CD8-positive, alpha-beta memory T cell (primary cell): ENCODE measurements at regions of chr19 and their contacts with region 1.

Region 1: GRCh38 chr19:11987405-11988281 is 22.8 kb downstream of the ZNF763 start:
- DNase-seq: peak; percentile 82 to 93 (median 87)
- H3K4me3 ChIP-seq: peak overlapping the region; percentile 64
- H3K4me3 Mint-ChIP-seq: peak overlapping the region; percentile 91 to 99 (median 98)
- H3K27ac ChIP-seq: peak overlapping the region; percentile 52
- H3K27ac Mint-ChIP-seq: peak overlapping the region; percentile 66 to 97 (median 92)
- H3K4me1 ChIP-seq: no peaks in the 10 kb centered on the region
- H3K4me1 Mint-ChIP-seq: peaks cover 22 to 44% (median 38%) of the 10 kb centered on the region in 3 donors
- H3K27me3 ChIP-seq: no peaks in the 10 kb centered on the region
- H3K27me3 Mint-ChIP-seq: no peaks in the 10 kb centered on the region

Region 2: DNA sequence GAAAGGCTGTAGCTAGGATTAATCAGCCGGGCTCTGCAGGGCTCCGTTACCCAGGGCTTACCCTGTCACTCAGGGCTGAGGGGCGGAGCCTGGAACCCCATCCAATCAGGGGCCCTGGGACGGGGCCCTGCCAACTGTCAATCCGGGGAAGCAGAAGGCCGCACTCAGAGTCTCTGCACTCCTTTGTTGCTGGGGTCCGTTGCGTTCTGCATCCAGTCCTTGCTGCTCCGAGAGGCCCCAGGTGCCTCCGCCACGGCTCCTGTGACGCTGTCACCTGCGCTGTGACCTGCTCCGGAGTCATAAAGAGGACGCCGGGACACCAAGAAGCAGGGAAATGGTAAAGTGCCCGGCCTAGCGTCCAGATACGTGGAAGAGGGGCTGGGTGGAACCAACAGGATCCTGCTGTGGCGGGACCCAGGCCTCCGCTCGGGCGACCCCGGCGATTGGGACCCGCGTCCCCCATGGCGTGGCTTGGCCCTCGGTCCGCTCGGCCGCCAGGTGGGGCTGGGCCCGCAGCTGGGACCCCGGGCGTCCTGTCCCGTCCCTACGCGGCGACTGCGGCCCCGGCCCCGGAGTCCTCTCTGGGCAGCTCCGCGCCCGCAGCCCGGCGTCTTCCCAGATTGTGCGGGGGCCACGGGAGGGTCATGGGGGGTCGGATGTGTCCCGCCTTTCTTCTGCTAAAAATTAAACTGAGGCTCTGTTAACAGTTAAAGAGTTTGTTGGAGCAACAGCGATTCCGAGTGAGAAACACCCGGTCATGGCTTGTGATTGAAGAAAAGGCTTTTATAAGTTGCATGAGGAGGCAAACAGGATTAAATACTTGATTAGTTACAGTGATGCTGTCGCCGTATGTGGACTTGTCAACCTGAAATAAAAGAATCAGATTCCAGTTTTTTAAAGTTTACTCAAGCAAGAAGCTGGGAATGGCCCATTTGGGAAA is 189.0 kb before region 1 on chr19 and contains the start of gene ZNF491:
- CTCF ChIA-PET with region 1: interaction called, 31 read pairs
- POLR2A ChIA-PET with region 1: interaction called, 11 read pairs
- DNase-seq: peak; percentile 71 to 86 (median 75)
- H3K4me3 ChIP-seq: peak within 1 kb of the TSS; percentile 67
- H3K4me3 Mint-ChIP-seq: peak within 1 kb of the TSS; percentile 87 to 95 (median 91)
- H3K27ac ChIP-seq: no peak within 1 kb of the TSS
- H3K27ac Mint-ChIP-seq: peak within 1 kb of the TSS; percentile 68 to 92 (median 88)
- H3K4me1 ChIP-seq: peaks cover 12% of the 10 kb centered on the region
- H3K4me1 Mint-ChIP-seq: peaks cover 12 to 20% (median 14%) of the 10 kb centered on the region in 3 donors
- H3K27me3 ChIP-seq: no peaks in the 10 kb centered on the region
- H3K27me3 Mint-ChIP-seq: peaks cover 0 to 5% of the 10 kb centered on the region in 2 donors
- total RNA-seq, gene ZNF491: 1.1 to 1.3 TPM

Region 3: GRCh38 chr19:11964858-11965645 is 22.6 kb before region 1 on chr19 and contains the start of gene ZNF763:
- CTCF ChIA-PET with region 1: interaction called, 126 read pairs
- POLR2A ChIA-PET with region 1: interaction called, 21 read pairs
- DNase-seq: peak; percentile 82 to 92 (median 85)
- H3K4me3 ChIP-seq: peak within 1 kb of the TSS; percentile 100
- H3K4me3 Mint-ChIP-seq: peak within 1 kb of the TSS; percentile 90 to 98 (median 97)
- H3K27ac ChIP-seq: peak within 1 kb of the TSS; percentile 91
- H3K27ac Mint-ChIP-seq: peak within 1 kb of the TSS; percentile 89 to 98 (median 95)
- H3K4me1 ChIP-seq: peaks cover 16% of the 10 kb centered on the region
- H3K4me1 Mint-ChIP-seq: peaks cover 26 to 30% (median 29%) of the 10 kb centered on the region in 3 donors
- H3K27me3 ChIP-seq: no peaks in the 10 kb centered on the region
- H3K27me3 Mint-ChIP-seq: no peaks in the 10 kb centered on the region
- total RNA-seq, gene ZNF763: 2.0 to 2.3 TPM

Region 4: DNA sequence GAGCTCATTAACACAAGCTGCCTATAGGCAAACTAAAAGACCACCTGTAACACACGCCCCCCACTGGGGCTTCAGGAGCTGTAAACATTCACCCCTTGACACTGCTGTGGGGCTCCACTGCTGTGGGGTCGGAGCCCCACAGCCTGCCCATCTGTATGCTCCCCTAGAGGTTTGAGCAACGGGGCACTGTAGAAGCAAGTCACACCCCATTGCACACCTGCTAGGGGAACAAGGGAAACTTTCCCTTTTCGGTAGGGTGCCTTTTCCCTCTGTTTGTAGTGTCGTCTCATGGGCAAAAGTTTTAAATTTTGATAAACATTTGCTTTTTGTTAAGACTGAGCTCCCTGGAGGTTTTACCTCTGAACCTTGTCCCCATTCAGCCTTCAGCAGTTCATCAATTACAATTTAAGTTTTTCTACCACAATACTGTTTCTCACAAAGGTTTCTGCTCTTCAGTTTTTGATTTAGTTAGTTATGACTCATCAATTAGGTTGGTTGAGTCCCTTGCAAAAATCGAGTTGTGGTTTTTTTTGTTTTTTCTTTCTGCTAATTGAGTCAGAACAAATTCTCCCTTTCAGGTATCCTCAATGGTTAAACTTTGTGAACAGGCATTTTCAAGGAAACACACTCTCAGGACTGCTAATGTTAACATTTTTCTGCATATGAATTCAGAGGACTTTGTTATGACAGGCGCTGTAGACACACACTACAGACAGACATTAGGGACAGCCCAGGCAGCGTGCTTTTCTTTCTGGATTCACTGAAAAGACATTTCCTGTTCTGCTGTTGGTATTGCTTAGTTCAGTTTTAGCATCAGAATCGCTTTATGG is 12.7 kb after region 1 on chr19:
- CTCF ChIA-PET with region 1: interaction called, 13 read pairs
- POLR2A ChIA-PET with region 1: interaction called, 10 read pairs
- DNase-seq: no peak
- H3K4me3 ChIP-seq: no peak overlapping the region
- H3K4me3 Mint-ChIP-seq: peak overlapping the region in 2 of 7 donors; percentile 2
- H3K27ac ChIP-seq: no peak overlapping the region
- H3K27ac Mint-ChIP-seq: peak overlapping the region in 7 of 8 donors; percentile 6 to 86 (median 64)
- H3K4me1 ChIP-seq: no peaks in the 10 kb centered on the region
- H3K4me1 Mint-ChIP-seq: peaks cover 20 to 30% (median 27%) of the 10 kb centered on the region in 3 donors
- H3K27me3 ChIP-seq: no peaks in the 10 kb centered on the region
- H3K27me3 Mint-ChIP-seq: no peaks in the 10 kb centered on the region